Mammary epithelial cell (primary cell): ENCODE measurements at regions of chr18 and their contacts with region 1.

Region 1: GRCh38 chr18:77054606-77055428 is 77.8 kb downstream of the MBP start:
- DNase-seq: no peak
- H3K4me3 ChIP-seq: no peak overlapping the region
- H3K27ac ChIP-seq: no peak overlapping the region
- H3K4me1 ChIP-seq: no peaks in the 10 kb centered on the region
- H3K27me3 ChIP-seq: no peaks in the 10 kb centered on the region
- CTCF ChIP-seq: peak; percentile 23 to 54

Region 2: DNA sequence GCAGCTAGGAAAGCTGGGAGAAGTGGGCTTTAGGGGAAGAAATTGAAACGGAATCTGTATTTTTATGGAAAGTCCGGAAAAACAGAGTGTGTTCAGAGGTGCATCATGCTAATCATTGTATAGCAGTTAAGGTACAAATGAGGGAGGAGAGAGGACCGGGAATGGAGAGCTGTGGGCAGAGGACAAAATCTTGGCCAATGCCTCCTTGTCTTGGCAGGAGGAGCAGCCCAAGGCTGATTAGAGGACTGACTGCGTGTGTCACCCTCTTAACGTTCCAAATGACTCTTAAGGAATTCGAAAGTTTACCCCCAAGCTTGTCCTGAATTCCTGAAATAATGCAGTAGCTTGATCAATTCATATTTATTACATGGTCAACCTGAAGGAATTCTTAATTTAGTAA is 151.4 kb before region 1 on chr18:
- CTCF ChIA-PET with region 1: no interaction called
- dilution Hi-C with region 1: no loop called
- in situ Hi-C with region 1: no loop called
- intact Hi-C with region 1: no loop called
- DNase-seq: no peak
- H3K4me3 ChIP-seq: no peak overlapping the region
- H3K27ac ChIP-seq: no peak overlapping the region
- H3K4me1 ChIP-seq: no peaks in the 10 kb centered on the region
- H3K27me3 ChIP-seq: no peaks in the 10 kb centered on the region
- CTCF ChIP-seq: no peak

Region 3: GRCh38 chr18:76932026-76932819 is 122.6 kb before region 1 on chr18:
- CTCF ChIA-PET with region 1: no interaction called
- dilution Hi-C with region 1: no loop called
- in situ Hi-C with region 1: no loop called
- intact Hi-C with region 1: no loop called
- DNase-seq: no peak
- H3K4me3 ChIP-seq: no peak overlapping the region
- H3K27ac ChIP-seq: no peak overlapping the region
- H3K4me1 ChIP-seq: no peaks in the 10 kb centered on the region
- H3K27me3 ChIP-seq: no peaks in the 10 kb centered on the region
- CTCF ChIP-seq: no peak

Region 4: GRCh38 chr18:77000527-77000926 is 54.3 kb before region 1 on chr18:
- CTCF ChIA-PET with region 1: no interaction called
- dilution Hi-C with region 1: no loop called
- in situ Hi-C with region 1: no loop called
- intact Hi-C with region 1: loop called (anchors 1 kb)
- DNase-seq: peak; percentile 17
- H3K4me3 ChIP-seq: no peak overlapping the region
- H3K27ac ChIP-seq: no peak overlapping the region
- H3K4me1 ChIP-seq: no peaks in the 10 kb centered on the region
- H3K27me3 ChIP-seq: no peaks in the 10 kb centered on the region
- CTCF ChIP-seq: peak; percentile 95 to 97